T-cell (primary cell): ENCODE measurements at regions of chr2 and their contacts with region 1.

Region 1: GRCh38 chr2:70340921-70341765 is 39.3 kb upstream of the FAM136A start:
- DNase-seq: peak in 26 of 35 experiments; percentile 2 to 67 (median 17)
- ATAC-seq: peak in 2 of 4 experiments; percentile 61 to 66
- H3K4me3 ChIP-seq: no peak overlapping the region
- H3K4me3 Mint-ChIP-seq: no peak overlapping the region
- H3K27ac ChIP-seq: no peak overlapping the region
- H3K27ac Mint-ChIP-seq: no peak overlapping the region
- H3K4me1 ChIP-seq: no peaks in the 10 kb centered on the region
- H3K4me1 Mint-ChIP-seq: peaks cover 2 to 12% (median 6%) of the 10 kb centered on the region in 3 donors
- H3K27me3 ChIP-seq: peaks cover 0 to 14% of the 10 kb centered on the region in 2 experiments
- H3K27me3 Mint-ChIP-seq: peaks cover 4 to 8% of the 10 kb centered on the region in 2 donors

Region 2: DNA sequence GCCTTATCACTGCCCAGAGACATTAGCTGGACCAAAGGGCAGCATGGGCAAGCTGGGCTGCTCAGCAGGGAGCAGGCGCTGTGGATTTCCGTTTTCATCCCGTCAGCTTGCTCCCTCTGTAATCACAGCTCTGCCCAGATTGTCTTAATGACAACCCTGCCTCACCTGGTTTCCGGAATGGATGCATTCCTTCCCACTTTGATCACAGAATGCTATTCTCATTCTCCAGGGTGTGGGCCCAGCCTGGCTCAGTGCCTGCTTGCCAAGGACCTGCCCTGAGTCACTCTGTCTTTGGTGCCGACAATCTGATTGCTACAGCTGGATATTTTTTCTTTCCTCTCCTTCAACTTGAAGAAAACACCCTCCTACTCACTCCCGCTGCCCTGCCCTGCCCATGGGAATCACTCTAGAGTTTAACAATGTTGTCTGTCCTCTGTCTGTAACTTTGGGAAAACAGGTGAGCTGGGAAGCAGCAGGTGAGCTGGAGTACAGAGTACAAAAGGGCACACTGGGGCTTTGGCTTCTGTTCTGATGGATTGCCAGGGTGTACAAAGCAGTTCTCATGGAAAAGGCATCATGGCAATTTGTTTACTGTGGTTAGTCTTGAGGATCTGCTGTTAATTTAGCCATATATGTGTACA is 12.1 kb before region 1 on chr2:
- CTCF ChIA-PET with region 1: interaction called in 1 of 2 experiments, 10 read pairs
- POLR2A ChIA-PET with region 1: no interaction called
- DNase-seq: no peak
- ATAC-seq: no peak
- H3K4me3 ChIP-seq: no peak overlapping the region
- H3K4me3 Mint-ChIP-seq: no peak overlapping the region
- H3K27ac ChIP-seq: no peak overlapping the region
- H3K27ac Mint-ChIP-seq: no peak overlapping the region
- H3K4me1 ChIP-seq: no peaks in the 10 kb centered on the region
- H3K4me1 Mint-ChIP-seq: no peaks in the 10 kb centered on the region
- H3K27me3 ChIP-seq: peaks cover 0 to 2% of the 10 kb centered on the region in 2 experiments
- H3K27me3 Mint-ChIP-seq: no peaks in the 10 kb centered on the region

Region 3: DNA sequence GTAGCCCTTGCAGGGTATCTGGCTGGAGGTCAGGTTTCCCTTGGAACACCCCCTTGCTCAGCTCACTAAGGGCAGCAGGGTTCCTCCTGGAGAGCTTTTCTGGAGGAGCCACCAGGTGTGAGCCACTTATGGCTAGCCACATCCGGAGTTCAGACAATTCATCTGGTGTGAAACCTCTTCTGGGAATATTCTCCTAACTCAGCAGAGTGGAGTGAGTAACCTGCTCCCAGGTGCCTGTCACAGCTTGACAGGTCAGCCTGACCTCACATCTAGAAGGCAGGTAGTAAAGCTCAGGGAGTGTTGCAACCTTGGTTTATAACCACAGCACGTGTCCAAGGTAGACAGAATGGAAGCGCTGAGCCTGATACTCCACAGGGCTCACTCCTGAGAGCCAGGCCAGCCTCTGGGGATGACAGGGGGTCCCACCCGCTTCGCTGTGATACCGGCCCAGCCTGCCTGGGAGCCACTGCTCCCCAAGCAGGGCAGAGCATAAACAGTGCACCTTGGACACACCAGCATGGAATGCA is 275.1 kb after region 1 on chr2:
- CTCF ChIA-PET with region 1: interaction called, 18 to 28 read pairs
- POLR2A ChIA-PET with region 1: no interaction called
- DNase-seq: no peak
- ATAC-seq: no peak
- H3K4me3 ChIP-seq: no peak overlapping the region
- H3K4me3 Mint-ChIP-seq: no peak overlapping the region
- H3K27ac ChIP-seq: no peak overlapping the region
- H3K27ac Mint-ChIP-seq: no peak overlapping the region
- H3K4me1 ChIP-seq: peaks cover 0 to 5% of the 10 kb centered on the region in 2 experiments
- H3K4me1 Mint-ChIP-seq: no peaks in the 10 kb centered on the region
- H3K27me3 ChIP-seq: peaks cover 0 to 11% of the 10 kb centered on the region in 2 experiments
- H3K27me3 Mint-ChIP-seq: peaks cover 7% of the 10 kb centered on the region in 2 donors